GM13977 (cell line): ENCODE measurements at regions of chr7 and their contacts with region 1.

Region 1: GRCh38 chr7:13279854-13280435 is 592.5 kb downstream of the ARL4A start:
- DNase-seq: no peak
- CTCF ChIP-seq: peak; percentile 22

Region 2: GRCh38 chr7:14691597-14692203 is 1411.8 kb after region 1 on chr7:
- in situ Hi-C with region 1: loop called (anchors 25 kb)
- DNase-seq: peak; percentile 25
- CTCF ChIP-seq: peak; percentile 85